RWPE1 (cell line): ENCODE measurements at regions of chr7 and their contacts with region 1.

Region 1: GRCh38 chr7:100874577-100875355 is at the start of gene SRRT:
- DNase-seq: peak; percentile 97
- H3K27ac ChIP-seq: peak within 1 kb of the TSS; percentile 100
- CTCF ChIP-seq: no peak

Region 2: GRCh38 chr7:100719523-100720319 is 155.0 kb before region 1 on chr7:
- CTCF ChIA-PET with region 1: no interaction called
- POLR2A ChIA-PET with region 1: interaction called, 14 read pairs
- DNase-seq: no peak
- H3K27ac ChIP-seq: no peak overlapping the region
- CTCF ChIP-seq: peak; percentile 71

Region 3: DNA sequence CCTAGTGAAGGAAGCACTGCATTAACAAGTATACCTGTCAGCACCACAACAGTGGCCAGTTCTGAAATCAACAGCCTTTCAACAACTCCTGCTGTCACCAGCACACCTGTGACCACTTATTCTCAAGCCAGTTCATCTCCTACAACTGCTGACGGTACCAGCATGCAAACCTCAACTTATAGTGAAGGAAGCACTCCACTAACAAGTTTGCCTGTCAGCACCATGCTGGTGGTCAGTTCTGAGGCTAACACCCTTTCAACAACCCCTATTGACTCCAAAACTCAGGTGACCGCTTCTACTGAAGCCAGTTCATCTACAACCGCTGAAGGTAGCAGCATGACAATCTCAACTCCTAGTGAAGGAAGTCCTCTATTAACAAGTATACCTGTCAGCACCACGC is 161.2 kb after region 1 on chr7:
- CTCF ChIA-PET with region 1: no interaction called
- POLR2A ChIA-PET with region 1: no interaction called
- DNase-seq: no peak
- H3K27ac ChIP-seq: no peak overlapping the region
- CTCF ChIP-seq: no peak

Region 4: GRCh38 chr7:101138213-101138870 is 263.6 kb after region 1 on chr7:
- CTCF ChIA-PET with region 1: no interaction called
- POLR2A ChIA-PET with region 1: no interaction called
- DNase-seq: peak; percentile 92
- H3K27ac ChIP-seq: peak overlapping the region; percentile 92
- CTCF ChIP-seq: peak; percentile 97